A549 (cell line): ENCODE measurements at regions of chr1 and their contacts with region 1.

Region 1: GRCh38 chr1:30801771-30802198 is 44.2 kb upstream of the LAPTM5 start:
- DNase-seq: peak; percentile 45 to 51
- ATAC-seq: peak; percentile 69 to 87; a peak in 5 of 6 replicates
- H3K4me3 ChIP-seq: no peak overlapping the region
- H3K27ac ChIP-seq: peak overlapping the region in 1 of 2 experiments; percentile 54; a peak in 2 of 6 replicates
- H3K4me1 ChIP-seq: 0 out of 3 replicates have a peak, but pooled peaks cover 3% of the 10 kb centered on the region
- CTCF ChIP-seq: peak; percentile 84
- EP300 ChIP-seq: no peak
- POLR2A ChIP-seq: no peak
- RAD21 ChIP-seq: peak; percentile 93 to 94

Region 2: GRCh38 chr1:30727824-30728223 is 74.0 kb before region 1 on chr1:
- CTCF ChIA-PET with region 1: interaction called, 10 read pairs
- POLR2A ChIA-PET with region 1: no interaction called
- DNase-seq: no peak
- ATAC-seq: peak; percentile 36 to 39; a peak in 2 of 6 replicates
- H3K4me3 ChIP-seq: no peak overlapping the region
- H3K27ac ChIP-seq: no peak overlapping the region
- H3K4me1 ChIP-seq: no peaks in the 10 kb centered on the region
- CTCF ChIP-seq: no peak
- EP300 ChIP-seq: no peak
- POLR2A ChIP-seq: no peak
- RAD21 ChIP-seq: no peak

Region 3: GRCh38 chr1:30816211-30817076 is 14.7 kb after region 1 on chr1:
- CTCF ChIA-PET with region 1: interaction called, 59 read pairs
- POLR2A ChIA-PET with region 1: no interaction called
- DNase-seq: no peak
- ATAC-seq: peak; percentile 48 to 62; a peak in 4 of 6 replicates
- H3K4me3 ChIP-seq: no peak overlapping the region
- H3K27ac ChIP-seq: peak overlapping the region in 1 of 2 experiments; percentile 39; a peak in 1 of 6 replicates
- H3K4me1 ChIP-seq: no peaks in the 10 kb centered on the region
- CTCF ChIP-seq: no peak
- EP300 ChIP-seq: no peak
- POLR2A ChIP-seq: no peak
- RAD21 ChIP-seq: no peak

Region 4: GRCh38 chr1:30847358-30847972 is 45.7 kb after region 1 on chr1:
- CTCF ChIA-PET with region 1: interaction called, 14 read pairs
- POLR2A ChIA-PET with region 1: no interaction called
- DNase-seq: no peak
- ATAC-seq: no peak
- H3K4me3 ChIP-seq: no peak overlapping the region
- H3K27ac ChIP-seq: no peak overlapping the region
- H3K4me1 ChIP-seq: no peaks in the 10 kb centered on the region
- CTCF ChIP-seq: no peak
- EP300 ChIP-seq: no peak
- POLR2A ChIP-seq: no peak
- RAD21 ChIP-seq: no peak

Region 5: GRCh38 chr1:30895944-30896660 is 94.3 kb after region 1 on chr1:
- CTCF ChIA-PET with region 1: interaction called, 24 read pairs
- POLR2A ChIA-PET with region 1: no interaction called
- DNase-seq: no peak
- ATAC-seq: no peak
- H3K4me3 ChIP-seq: no peak overlapping the region
- H3K27ac ChIP-seq: peak overlapping the region in 1 of 2 experiments; percentile 7; a peak in 1 of 6 replicates
- H3K4me1 ChIP-seq: peaks cover 6% of the 10 kb centered on the region; the same call in 2 of the 3 replicates
- CTCF ChIP-seq: no peak
- EP300 ChIP-seq: no peak
- POLR2A ChIP-seq: no peak
- RAD21 ChIP-seq: no peak

Region 6: DNA sequence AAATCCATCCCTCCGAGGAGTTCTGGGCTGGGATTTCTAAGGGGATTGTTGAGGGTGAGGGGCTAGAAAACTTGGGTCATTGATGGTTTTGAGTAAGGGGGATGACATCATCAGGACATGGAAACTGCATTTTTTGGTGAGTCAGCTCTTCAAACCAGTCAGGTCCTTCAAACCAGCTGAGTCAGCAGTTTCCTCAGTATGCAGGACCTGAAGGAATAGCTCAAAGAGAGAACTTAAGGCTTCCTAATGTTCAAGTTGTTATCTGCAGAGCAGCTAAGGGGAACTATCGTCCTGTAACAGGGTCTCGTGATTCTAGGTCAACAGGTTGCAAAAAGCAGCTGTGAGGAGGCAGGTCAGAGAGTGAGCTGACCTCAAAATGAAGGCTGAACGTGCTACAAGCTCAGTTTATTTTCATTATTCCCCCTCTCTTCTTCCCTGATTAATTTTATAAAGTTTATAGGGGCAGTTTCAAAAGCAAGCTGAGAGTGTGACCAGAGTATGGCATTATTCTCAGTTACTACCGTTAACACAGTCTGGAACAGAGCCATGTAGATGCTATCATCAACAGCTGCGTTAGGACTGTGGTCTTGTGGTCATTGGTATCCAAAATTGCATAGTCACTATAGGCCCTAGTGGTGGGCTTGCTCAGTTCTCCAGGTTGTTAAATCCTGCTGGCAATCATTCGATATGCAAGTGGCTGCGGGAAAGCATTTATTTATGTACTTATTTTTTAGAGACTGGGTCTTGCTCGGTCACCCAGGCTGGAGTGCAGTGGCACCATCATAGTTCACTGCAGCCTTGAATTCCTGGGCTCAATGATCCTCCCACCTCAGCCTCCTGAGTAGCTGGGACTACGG is 117.5 kb after region 1 on chr1:
- CTCF ChIA-PET with region 1: interaction called, 743 read pairs
- POLR2A ChIA-PET with region 1: no interaction called
- DNase-seq: no peak
- ATAC-seq: no peak
- H3K4me3 ChIP-seq: no peak overlapping the region
- H3K27ac ChIP-seq: no peak overlapping the region
- H3K4me1 ChIP-seq: no peaks in the 10 kb centered on the region
- CTCF ChIP-seq: no peak
- EP300 ChIP-seq: no peak
- POLR2A ChIP-seq: no peak
- RAD21 ChIP-seq: no peak